MCF 10A (cell line): ENCODE measurements at regions of chr6 and their contacts with region 1.

Region 1: GRCh38 chr6:133707456-133707855 is 181.5 kb upstream of the TCF21 start:
- DNase-seq: peak; percentile 28
- H3K4me3 Mint-ChIP-seq: no peak overlapping the region
- H3K27ac Mint-ChIP-seq: peak overlapping the region; percentile 69
- H3K4me1 Mint-ChIP-seq: peaks cover 35% of the 10 kb centered on the region
- H3K27me3 Mint-ChIP-seq: no peaks in the 10 kb centered on the region
- CTCF ChIP-seq: no peak

Region 2: GRCh38 chr6:133553652-133554051 is 153.8 kb before region 1 on chr6:
- CTCF ChIA-PET with region 1: no interaction called
- POLR2A ChIA-PET with region 1: no interaction called
- intact Hi-C with region 1: no loop called
- DNase-seq: peak; percentile 70
- H3K4me3 Mint-ChIP-seq: no peak overlapping the region
- H3K27ac Mint-ChIP-seq: no peak overlapping the region
- H3K4me1 Mint-ChIP-seq: peaks cover 12% of the 10 kb centered on the region
- H3K27me3 Mint-ChIP-seq: no peaks in the 10 kb centered on the region
- CTCF ChIP-seq: peak; percentile 61

Region 3: DNA sequence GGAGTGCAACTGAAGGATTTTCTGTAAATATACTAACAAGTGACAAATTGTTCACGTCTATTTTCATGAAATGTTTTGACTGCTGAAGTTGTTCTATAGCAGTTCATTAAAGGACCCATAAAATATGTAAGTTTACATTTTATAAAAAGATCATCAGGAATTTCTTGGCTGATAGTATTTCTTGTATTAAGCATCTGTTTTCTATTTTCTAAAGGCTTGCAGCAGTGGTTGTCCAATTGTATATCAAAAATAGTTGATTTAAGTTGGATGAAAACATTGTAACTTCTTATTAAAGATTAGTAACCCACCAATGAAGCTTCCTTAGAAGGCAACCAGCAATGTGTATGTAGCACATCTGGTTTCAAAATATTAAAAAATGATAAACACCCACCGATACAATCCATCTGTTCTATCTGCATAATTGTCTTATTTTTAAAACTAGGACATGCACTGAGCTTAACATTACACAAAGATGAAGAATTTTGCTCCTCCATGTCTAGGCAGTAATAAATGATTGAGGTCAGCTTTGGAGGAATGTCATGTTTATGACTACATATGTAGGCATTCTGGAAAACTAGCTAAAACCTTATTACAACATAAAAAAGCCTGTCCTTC is 119.8 kb before region 1 on chr6:
- CTCF ChIA-PET with region 1: interaction called, 3 read pairs
- POLR2A ChIA-PET with region 1: interaction called, 3 read pairs
- intact Hi-C with region 1: loop called (anchors 1 kb)
- DNase-seq: no peak
- H3K4me3 Mint-ChIP-seq: no peak overlapping the region
- H3K27ac Mint-ChIP-seq: no peak overlapping the region
- H3K4me1 Mint-ChIP-seq: peaks cover 26% of the 10 kb centered on the region
- H3K27me3 Mint-ChIP-seq: no peaks in the 10 kb centered on the region
- CTCF ChIP-seq: no peak

Region 4: GRCh38 chr6:133741375-133741861 is 34.0 kb after region 1 on chr6:
- CTCF ChIA-PET with region 1: no interaction called
- POLR2A ChIA-PET with region 1: no interaction called
- intact Hi-C with region 1: loop called (anchors 2 kb)
- DNase-seq: peak; percentile 93
- H3K4me3 Mint-ChIP-seq: no peak overlapping the region
- H3K27ac Mint-ChIP-seq: peak overlapping the region; percentile 57
- H3K4me1 Mint-ChIP-seq: peaks cover 13% of the 10 kb centered on the region
- H3K27me3 Mint-ChIP-seq: no peaks in the 10 kb centered on the region
- CTCF ChIP-seq: no peak